CD4-positive, alpha-beta T cell (primary cell): ENCODE measurements at regions of chr19 and their contacts with region 1.

Region 1: GRCh38 chr19:48858984-48859710 is 9.3 kb downstream of the PLEKHA4 start:
- DNase-seq: peak; percentile 64 to 89 (median 78)
- ATAC-seq: peak; percentile 83
- H3K4me3 ChIP-seq: peak overlapping the region; percentile 51
- H3K4me3 Mint-ChIP-seq: peak overlapping the region; percentile 95
- H3K27ac ChIP-seq: no peak overlapping the region
- H3K27ac Mint-ChIP-seq: peak overlapping the region; percentile 47
- H3K4me1 ChIP-seq: peaks cover 20% of the 10 kb centered on the region
- H3K4me1 Mint-ChIP-seq: peaks cover 5% of the 10 kb centered on the region
- H3K27me3 ChIP-seq: no peaks in the 10 kb centered on the region
- H3K27me3 Mint-ChIP-seq: no peaks in the 10 kb centered on the region
- CTCF ChIP-seq: no peak

Region 2: DNA sequence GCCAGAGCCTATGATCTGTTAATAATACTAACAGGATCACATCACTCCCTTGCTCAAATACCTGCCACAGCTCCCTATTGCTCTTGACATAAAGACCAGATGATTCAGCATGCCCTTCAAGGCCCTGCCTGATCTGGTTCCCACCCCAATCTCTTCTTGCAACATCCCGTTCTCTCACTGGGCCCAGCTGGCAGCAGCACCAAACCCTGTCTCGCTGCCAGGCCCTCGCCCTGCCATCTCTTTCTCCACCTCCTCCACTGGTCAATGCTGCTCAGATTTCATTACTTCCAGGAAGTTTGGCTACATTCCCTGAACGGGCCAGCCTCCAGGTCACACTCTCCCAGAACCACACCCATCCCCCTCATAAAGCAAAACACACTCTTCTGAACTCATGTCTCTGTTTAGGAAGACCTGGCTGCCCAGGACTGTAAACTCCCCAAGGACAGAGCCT is 39.8 kb before region 1 on chr19:
- CTCF ChIA-PET with region 1: no interaction called
- POLR2A ChIA-PET with region 1: no interaction called
- intact Hi-C with region 1: no loop called
- DNase-seq: no peak
- ATAC-seq: no peak
- H3K4me3 ChIP-seq: no peak overlapping the region
- H3K4me3 Mint-ChIP-seq: no peak overlapping the region
- H3K27ac ChIP-seq: no peak overlapping the region
- H3K27ac Mint-ChIP-seq: no peak overlapping the region
- H3K4me1 ChIP-seq: no peaks in the 10 kb centered on the region
- H3K4me1 Mint-ChIP-seq: peaks cover 10% of the 10 kb centered on the region
- H3K27me3 ChIP-seq: no peaks in the 10 kb centered on the region
- H3K27me3 Mint-ChIP-seq: no peaks in the 10 kb centered on the region
- CTCF ChIP-seq: no peak

Region 3: GRCh38 chr19:48830088-48830487 is 29.1 kb before region 1 on chr19:
- CTCF ChIA-PET with region 1: no interaction called
- POLR2A ChIA-PET with region 1: no interaction called
- intact Hi-C with region 1: no loop called
- DNase-seq: no peak
- ATAC-seq: no peak
- H3K4me3 ChIP-seq: no peak overlapping the region
- H3K4me3 Mint-ChIP-seq: no peak overlapping the region
- H3K27ac ChIP-seq: no peak overlapping the region
- H3K27ac Mint-ChIP-seq: no peak overlapping the region
- H3K4me1 ChIP-seq: no peaks in the 10 kb centered on the region
- H3K4me1 Mint-ChIP-seq: peaks cover 4% of the 10 kb centered on the region
- H3K27me3 ChIP-seq: no peaks in the 10 kb centered on the region
- H3K27me3 Mint-ChIP-seq: no peaks in the 10 kb centered on the region
- CTCF ChIP-seq: no peak

Region 4: GRCh38 chr19:48872182-48872883 is 13.2 kb after region 1 on chr19 and contains the start of gene PPP1R15A:
- CTCF ChIA-PET with region 1: interaction called, 7 read pairs
- POLR2A ChIA-PET with region 1: interaction called, 6 read pairs
- intact Hi-C with region 1: loop called (anchors 1 kb)
- DNase-seq: peak; percentile 94 to 100 (median 99)
- ATAC-seq: peak; percentile 33
- H3K4me3 ChIP-seq: peak within 1 kb of the TSS; percentile 100
- H3K4me3 Mint-ChIP-seq: peak within 1 kb of the TSS; percentile 96
- H3K27ac ChIP-seq: peak within 1 kb of the TSS; percentile 100
- H3K27ac Mint-ChIP-seq: peak within 1 kb of the TSS; percentile 98
- H3K4me1 ChIP-seq: peaks cover 45% of the 10 kb centered on the region
- H3K4me1 Mint-ChIP-seq: peaks cover 45% of the 10 kb centered on the region
- H3K27me3 ChIP-seq: peaks cover 0 to under 1% of the 10 kb centered on the region in 2 experiments
- H3K27me3 Mint-ChIP-seq: no peaks in the 10 kb centered on the region
- CTCF ChIP-seq: no peak
- total RNA-seq, gene PPP1R15A: 569 to 584 TPM

Region 5: GRCh38 chr19:48887861-48888612 is 28.9 kb after region 1 on chr19:
- CTCF ChIA-PET with region 1: no interaction called
- POLR2A ChIA-PET with region 1: no interaction called
- intact Hi-C with region 1: no loop called
- DNase-seq: no peak
- ATAC-seq: no peak
- H3K4me3 ChIP-seq: no peak overlapping the region
- H3K4me3 Mint-ChIP-seq: no peak overlapping the region
- H3K27ac ChIP-seq: no peak overlapping the region
- H3K27ac Mint-ChIP-seq: no peak overlapping the region
- H3K4me1 ChIP-seq: no peaks in the 10 kb centered on the region
- H3K4me1 Mint-ChIP-seq: no peaks in the 10 kb centered on the region
- H3K27me3 ChIP-seq: no peaks in the 10 kb centered on the region
- H3K27me3 Mint-ChIP-seq: peaks cover 21% of the 10 kb centered on the region
- CTCF ChIP-seq: no peak

Region 6: DNA sequence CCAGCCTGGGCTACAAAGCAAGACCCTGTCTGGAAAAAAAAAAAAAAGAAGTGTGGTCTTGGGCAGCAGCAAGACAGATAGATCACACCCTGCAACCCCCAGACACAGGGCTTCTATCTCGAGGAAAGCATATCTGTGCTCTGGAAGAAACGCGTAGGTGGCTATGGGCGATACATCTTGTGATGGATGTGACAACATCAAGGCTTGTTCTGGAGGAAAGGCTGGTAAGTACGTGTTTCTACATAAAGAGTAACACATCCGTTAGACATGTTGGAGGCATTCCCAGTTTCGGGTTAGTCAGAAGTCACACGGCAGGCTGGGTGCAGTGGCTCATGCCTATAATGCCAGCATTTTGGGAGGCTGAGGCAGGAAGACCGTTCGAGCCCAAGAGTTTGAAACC is 67.8 kb after region 1 on chr19:
- CTCF ChIA-PET with region 1: no interaction called
- POLR2A ChIA-PET with region 1: no interaction called
- intact Hi-C with region 1: no loop called
- DNase-seq: peak in 5 of 14 experiments; percentile 10 to 40 (median 22)
- ATAC-seq: peak; percentile 87
- H3K4me3 ChIP-seq: peak overlapping the region; percentile 25
- H3K4me3 Mint-ChIP-seq: peak overlapping the region; percentile 81
- H3K27ac ChIP-seq: no peak overlapping the region
- H3K27ac Mint-ChIP-seq: peak overlapping the region; percentile 73
- H3K4me1 ChIP-seq: peaks cover 5% of the 10 kb centered on the region
- H3K4me1 Mint-ChIP-seq: peaks cover 10% of the 10 kb centered on the region
- H3K27me3 ChIP-seq: no peaks in the 10 kb centered on the region
- H3K27me3 Mint-ChIP-seq: no peaks in the 10 kb centered on the region
- CTCF ChIP-seq: no peak